WTC11 (cell line): ENCODE measurements at regions of chr1 and their contacts with region 1.

Region 1: DNA sequence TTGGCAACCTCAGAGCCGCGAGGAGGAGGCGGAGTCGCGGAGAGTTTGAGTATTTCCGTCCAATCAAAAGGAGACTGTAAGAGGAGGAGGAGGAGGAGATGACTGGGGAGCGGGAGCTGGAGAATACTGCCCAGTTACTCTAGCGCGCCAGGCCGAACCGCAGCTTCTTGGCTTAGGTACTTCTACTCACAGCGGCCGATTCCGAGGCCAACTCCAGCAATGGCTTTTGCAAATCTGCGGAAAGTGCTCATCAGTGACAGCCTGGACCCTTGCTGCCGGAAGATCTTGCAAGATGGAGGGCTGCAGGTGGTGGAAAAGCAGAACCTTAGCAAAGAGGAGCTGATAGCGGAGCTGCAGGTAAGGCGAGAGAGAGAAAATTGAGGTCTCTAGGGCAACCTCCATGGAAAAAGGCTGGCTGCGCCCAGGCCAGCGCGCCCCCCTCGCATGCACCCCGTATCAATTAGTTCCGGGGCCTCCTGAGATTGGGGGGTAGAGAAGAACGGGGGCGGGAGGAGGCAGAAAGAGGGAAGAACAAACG is at the start of gene PHGDH:
- DNase-seq: peak; percentile 78
- ATAC-seq: peak; percentile 73
- H3K4me3 Mint-ChIP-seq: peak within 1 kb of the TSS; percentile 98
- H3K27ac Mint-ChIP-seq: peak within 1 kb of the TSS; percentile 99
- H3K4me1 Mint-ChIP-seq: peaks cover 44% of the 10 kb centered on the region
- H3K27me3 Mint-ChIP-seq: no peaks in the 10 kb centered on the region; the same call in 1 of the 2 replicates
- CTCF ChIP-seq: no peak
- total RNA-seq, gene PHGDH: 592 to 630 TPM (median 618 TPM) in 3 replicates

Region 2: GRCh38 chr1:119594376-119594775 is 117.5 kb before region 1 on chr1:
- CTCF ChIA-PET with region 1: no interaction called
- POLR2A ChIA-PET with region 1: no interaction called
- DNase-seq: no peak
- ATAC-seq: no peak
- H3K4me3 Mint-ChIP-seq: no peak overlapping the region
- H3K27ac Mint-ChIP-seq: no peak overlapping the region
- H3K4me1 Mint-ChIP-seq: no peaks in the 10 kb centered on the region
- H3K27me3 Mint-ChIP-seq: no peaks in the 10 kb centered on the region
- CTCF ChIP-seq: no peak

Region 3: DNA sequence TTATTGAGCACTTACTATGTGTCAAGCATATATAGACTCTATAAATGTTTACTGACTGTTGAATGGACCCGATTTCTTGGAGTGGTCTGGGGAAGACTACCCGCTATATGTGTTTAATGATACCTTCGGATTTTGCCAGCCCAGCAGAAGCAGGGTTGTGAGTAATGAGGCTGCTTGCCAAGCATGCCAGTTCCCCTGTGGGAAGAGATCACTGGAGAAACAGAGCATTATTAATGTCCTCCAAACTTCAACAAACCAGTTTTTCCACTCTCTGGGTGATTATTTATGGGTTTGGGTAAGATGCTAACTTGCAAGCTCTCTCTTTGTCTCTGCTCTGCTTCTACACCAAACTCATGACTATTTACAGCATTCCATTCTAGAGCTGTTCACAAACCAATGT is 25.2 kb before region 1 on chr1:
- CTCF ChIA-PET with region 1: interaction called, 5 read pairs
- POLR2A ChIA-PET with region 1: interaction called, 22 read pairs
- DNase-seq: no peak
- ATAC-seq: no peak
- H3K4me3 Mint-ChIP-seq: no peak overlapping the region
- H3K27ac Mint-ChIP-seq: peak overlapping the region; percentile 65; the same call in 1 of the 2 replicates
- H3K4me1 Mint-ChIP-seq: peaks cover 55% of the 10 kb centered on the region
- H3K27me3 Mint-ChIP-seq: no peaks in the 10 kb centered on the region
- CTCF ChIP-seq: no peak

Region 4: GRCh38 chr1:119725378-119726025 is 13.6 kb after region 1 on chr1:
- CTCF ChIA-PET with region 1: no interaction called
- POLR2A ChIA-PET with region 1: interaction called, 17 read pairs
- DNase-seq: no peak
- ATAC-seq: no peak
- H3K4me3 Mint-ChIP-seq: no peak overlapping the region
- H3K27ac Mint-ChIP-seq: peak overlapping the region; percentile 46
- H3K4me1 Mint-ChIP-seq: peaks cover 18% of the 10 kb centered on the region
- H3K27me3 Mint-ChIP-seq: no peaks in the 10 kb centered on the region
- CTCF ChIP-seq: no peak

Region 5: DNA sequence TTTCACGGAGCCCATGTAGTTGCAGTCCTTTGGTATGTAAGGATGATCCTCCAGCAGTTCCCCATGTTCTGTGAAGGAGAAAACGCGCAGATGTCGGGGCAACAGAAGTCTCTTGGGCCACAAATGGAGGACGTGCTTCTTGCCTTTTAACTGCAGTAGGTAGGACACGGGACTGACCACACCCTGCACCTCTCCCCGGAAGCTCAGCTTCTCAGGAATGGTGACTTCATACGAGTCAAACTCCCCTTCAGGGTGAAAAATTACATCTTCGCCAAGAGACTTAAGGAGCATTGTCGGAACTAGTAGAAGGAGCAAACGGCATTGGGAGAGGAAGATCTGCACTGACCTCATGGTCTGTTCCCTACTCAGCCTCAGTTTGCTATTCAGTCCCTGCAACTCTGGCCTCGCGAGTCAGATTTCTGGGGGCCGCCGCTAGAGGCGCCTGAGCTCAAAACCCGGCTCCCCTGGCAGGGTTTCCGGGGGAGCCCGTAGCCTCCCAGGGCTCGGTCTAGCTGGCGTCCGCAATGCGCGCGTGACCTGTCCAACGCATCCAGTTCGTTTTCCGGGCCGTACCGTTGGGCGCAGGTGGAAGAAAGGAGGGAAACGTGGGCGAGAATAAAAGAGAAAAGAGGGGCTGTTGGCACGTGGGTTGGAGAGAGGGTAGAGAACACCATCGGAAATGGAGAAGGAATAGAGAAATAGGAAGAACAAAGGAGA is 184.3 kb after region 1 on chr1 and contains the start of gene ADAM30:
- CTCF ChIA-PET with region 1: no interaction called
- POLR2A ChIA-PET with region 1: no interaction called
- DNase-seq: peak; percentile 74
- ATAC-seq: peak; percentile 98
- H3K4me3 Mint-ChIP-seq: peak within 1 kb of the TSS; percentile 55
- H3K27ac Mint-ChIP-seq: no peak within 1 kb of the TSS
- H3K4me1 Mint-ChIP-seq: peaks cover 5% of the 10 kb centered on the region; the same call in 1 of the 2 replicates
- H3K27me3 Mint-ChIP-seq: peaks cover 2% of the 10 kb centered on the region; the same call in 1 of the 2 replicates
- CTCF ChIP-seq: no peak; the same call in 1 of the 2 replicates
- total RNA-seq, gene ADAM30: not detected in 3 replicates